ENCODE measurements at regions of chr4 and their contacts with region 1.

Region 1: GRCh38 chr4:110637408-110638088 is 14.7 kb upstream of the PITX2 start:
- DNase-seq: no peak
- ATAC-seq: no peak
- H3K4me3 ChIP-seq: no peak overlapping the region
- H3K4me3 Mint-ChIP-seq: peak overlapping the region in 2 of 10 donors; percentile 13 to 37
- H3K27ac ChIP-seq: no peak overlapping the region
- H3K27ac Mint-ChIP-seq: peak overlapping the region in 1 of 9 donors; percentile 56
- H3K4me1 ChIP-seq: no peaks in the 10 kb centered on the region
- H3K4me1 Mint-ChIP-seq: peaks cover 0 to 17% (median 7%) of the 10 kb centered on the region in 7 donors
- H3K27me3 ChIP-seq: peaks cover 6 to 47% of the 10 kb centered on the region in 2 donors
- H3K27me3 Mint-ChIP-seq: peaks cover 78 to 93% (median 81%) of the 10 kb centered on the region in 5 donors

Region 2: DNA sequence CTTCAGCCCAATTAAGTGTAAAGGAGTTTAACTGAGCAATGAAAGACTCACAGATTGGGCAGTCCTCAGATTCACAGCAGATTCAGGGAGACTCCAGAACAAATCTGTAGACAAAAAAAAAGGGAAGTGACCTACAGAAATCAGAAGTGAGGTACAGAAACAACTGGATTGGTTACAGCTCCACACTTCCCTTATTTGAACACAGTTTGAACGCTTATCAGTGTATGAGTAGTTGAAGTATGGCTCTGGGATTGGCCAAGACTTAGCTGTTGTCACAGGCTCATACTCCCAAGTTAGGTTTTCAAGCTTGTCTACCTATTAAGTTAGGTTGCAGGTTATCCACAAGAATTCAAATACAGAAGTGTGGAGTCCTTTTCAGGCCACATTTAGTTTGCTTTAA is 326.8 kb before region 1 on chr4:
- CTCF ChIA-PET with region 1: no interaction called
- POLR2A ChIA-PET with region 1: no interaction called
- intact Hi-C with region 1: no loop called
- DNase-seq: no peak
- ATAC-seq: peak; percentile 72
- H3K4me3 ChIP-seq: no peak overlapping the region
- H3K4me3 Mint-ChIP-seq: no peak overlapping the region
- H3K27ac ChIP-seq: no peak overlapping the region
- H3K27ac Mint-ChIP-seq: peak overlapping the region in 1 of 9 donors; percentile 33
- H3K4me1 ChIP-seq: no peaks in the 10 kb centered on the region
- H3K4me1 Mint-ChIP-seq: no peaks in the 10 kb centered on the region
- H3K27me3 ChIP-seq: no peaks in the 10 kb centered on the region
- H3K27me3 Mint-ChIP-seq: peaks cover 10 to 25% (median 18%) of the 10 kb centered on the region in 5 donors

Region 3: DNA sequence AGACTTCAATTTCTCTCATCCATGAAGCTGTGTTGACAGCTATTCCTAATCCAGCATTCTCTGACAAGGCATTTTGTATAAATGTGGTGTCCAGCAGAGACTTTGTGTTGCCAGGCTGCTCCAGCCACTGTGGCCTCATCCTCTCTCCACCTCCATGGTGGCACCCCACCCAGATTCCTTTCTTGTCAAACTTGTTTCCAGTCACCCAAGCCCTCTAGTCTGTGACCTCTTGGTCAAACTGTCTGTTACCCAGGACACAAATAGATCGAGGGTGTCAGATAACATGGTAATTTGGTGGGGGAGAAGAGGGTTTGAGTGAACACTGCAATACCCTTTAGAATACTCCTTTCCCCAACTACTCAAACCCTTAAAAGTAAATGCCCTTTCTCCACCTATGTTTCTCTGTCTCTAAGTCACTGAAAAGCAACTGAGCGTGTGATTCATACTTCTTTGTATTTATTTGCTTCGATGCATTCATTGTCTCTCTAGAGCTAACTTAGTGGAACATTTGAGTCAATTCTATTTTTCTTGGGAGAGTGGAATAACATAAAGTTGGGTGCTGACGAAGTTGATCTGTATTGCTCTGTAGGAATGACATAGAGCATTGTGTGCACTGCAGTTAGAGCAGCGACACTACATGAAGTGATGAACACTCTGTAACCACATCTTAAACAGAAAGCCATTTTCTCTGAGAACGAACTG is 28.3 kb before region 1 on chr4:
- CTCF ChIA-PET with region 1: no interaction called
- POLR2A ChIA-PET with region 1: no interaction called
- intact Hi-C with region 1: loop called in 1 of 2 experiments (anchors 5 kb)
- DNase-seq: no peak
- ATAC-seq: no peak
- H3K4me3 ChIP-seq: no peak overlapping the region
- H3K4me3 Mint-ChIP-seq: no peak overlapping the region
- H3K27ac ChIP-seq: no peak overlapping the region
- H3K27ac Mint-ChIP-seq: no peak overlapping the region
- H3K4me1 ChIP-seq: no peaks in the 10 kb centered on the region
- H3K4me1 Mint-ChIP-seq: peaks cover 0 to 4% (median 0%) of the 10 kb centered on the region in 7 donors
- H3K27me3 ChIP-seq: peaks cover 6 to 29% of the 10 kb centered on the region in 2 donors
- H3K27me3 Mint-ChIP-seq: peaks cover 58 to 66% (median 62%) of the 10 kb centered on the region in 5 donors

Region 4: DNA sequence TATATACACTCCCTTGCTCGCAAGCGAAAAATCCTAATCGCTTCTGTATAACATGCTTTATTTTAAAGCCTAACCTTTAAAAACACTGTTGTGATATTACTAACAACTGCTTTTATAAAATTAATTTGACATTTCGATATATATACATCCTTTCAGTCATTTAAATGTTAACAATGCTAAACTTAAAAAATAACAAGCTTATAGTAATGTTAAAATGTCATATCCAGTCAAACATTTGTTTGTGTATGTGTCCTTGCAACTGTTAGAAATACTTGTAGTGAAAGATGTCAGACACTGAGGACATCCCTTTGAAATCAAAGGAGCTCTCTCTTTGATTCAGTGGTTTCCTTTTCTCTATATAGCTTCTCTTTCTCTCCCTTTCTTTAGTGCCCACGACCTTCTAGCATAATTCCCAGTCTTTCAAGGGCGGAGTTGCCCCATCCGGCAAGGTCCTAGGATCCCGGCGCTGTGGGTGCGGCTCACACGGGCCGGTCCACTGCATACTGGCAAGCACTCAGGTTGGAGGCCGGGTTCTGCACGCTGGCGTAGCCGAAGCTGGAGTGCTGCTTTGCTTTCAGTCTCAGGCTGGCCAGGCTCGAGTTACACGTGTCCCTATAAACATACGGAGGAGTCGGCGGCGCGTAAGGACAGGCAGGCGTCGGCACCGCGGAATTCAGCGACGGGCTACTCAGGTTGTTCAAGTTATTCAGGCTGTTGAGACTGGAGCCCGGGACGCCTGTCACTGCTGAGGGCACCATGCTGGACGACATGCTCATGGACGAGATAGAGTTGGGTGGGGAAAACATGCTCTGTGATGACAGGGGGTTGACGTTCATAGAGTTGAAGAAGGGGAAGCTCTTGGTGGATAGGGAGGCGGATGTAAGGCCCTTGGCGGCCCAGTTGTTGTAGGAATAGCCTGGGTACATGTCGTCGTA is 19.6 kb before region 1 on chr4:
- CTCF ChIA-PET with region 1: no interaction called
- POLR2A ChIA-PET with region 1: no interaction called
- intact Hi-C with region 1: loop called in 1 of 2 experiments (anchors 2 kb)
- DNase-seq: no peak
- ATAC-seq: no peak
- H3K4me3 ChIP-seq: no peak overlapping the region
- H3K4me3 Mint-ChIP-seq: peak overlapping the region in 8 of 10 donors; percentile 7 to 65 (median 44)
- H3K27ac ChIP-seq: no peak overlapping the region
- H3K27ac Mint-ChIP-seq: peak overlapping the region in 3 of 9 donors; percentile 56 to 67 (median 65)
- H3K4me1 ChIP-seq: peaks cover 0 to 8% of the 10 kb centered on the region in 2 donors
- H3K4me1 Mint-ChIP-seq: peaks cover 13 to 54% (median 49%) of the 10 kb centered on the region in 7 donors
- H3K27me3 ChIP-seq: peaks cover 10 to 42% of the 10 kb centered on the region in 2 donors
- H3K27me3 Mint-ChIP-seq: peaks cover 89 to 98% (median 96%) of the 10 kb centered on the region in 5 donors

Measured in naive thymus-derived CD4-positive, alpha-beta T cell (primary cell).